PC-3 (cell line): ENCODE measurements at regions of chr19 and their contacts with region 1.

Region 1: DNA sequence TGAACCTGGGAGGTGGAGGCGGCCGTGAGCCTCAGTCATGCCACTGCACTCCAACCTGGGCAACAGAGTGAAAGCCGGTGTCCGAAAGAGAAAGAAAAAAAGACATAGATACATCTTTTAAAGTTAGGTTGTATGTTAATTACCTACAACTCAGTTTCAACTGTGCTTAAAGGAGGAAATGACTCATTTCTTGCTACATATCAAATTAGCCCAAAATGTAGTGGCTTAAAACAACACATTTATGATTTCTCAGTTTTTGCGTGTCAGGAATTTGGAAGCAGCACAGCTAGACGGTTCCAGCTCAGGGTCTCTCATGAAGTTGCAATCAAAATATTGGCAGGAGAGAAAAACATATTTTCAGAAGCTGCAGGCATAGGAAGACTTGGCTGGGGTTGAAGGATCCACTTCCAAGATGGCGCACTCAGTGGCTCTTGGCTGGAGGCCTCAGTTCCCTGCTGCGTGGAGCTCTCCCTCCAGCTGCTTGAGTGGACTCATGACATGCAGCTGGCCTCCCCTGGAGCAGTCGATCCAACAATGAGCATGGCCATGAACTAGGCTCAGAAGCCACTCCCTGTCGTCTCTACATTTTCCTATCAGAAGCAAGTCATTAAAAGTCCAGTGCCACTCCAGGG is 7.1 kb downstream of the LDLR start:
- DNase-seq: peak; percentile 35
- ATAC-seq: no peak
- H3K4me3 ChIP-seq: peak overlapping the region; percentile 24
- H3K27ac ChIP-seq: peak overlapping the region; percentile 93
- H3K4me1 ChIP-seq: peaks cover 41% of the 10 kb centered on the region
- H3K27me3 ChIP-seq: no peaks in the 10 kb centered on the region
- CTCF ChIP-seq: no peak

Region 2: GRCh38 chr19:11125994-11126685 is 29.8 kb after region 1 on chr19:
- CTCF ChIA-PET with region 1: no interaction called
- POLR2A ChIA-PET with region 1: interaction called, 10 read pairs
- intact Hi-C with region 1: no loop called
- DNase-seq: peak; percentile 87
- ATAC-seq: peak; percentile 74
- H3K4me3 ChIP-seq: no peak overlapping the region
- H3K27ac ChIP-seq: no peak overlapping the region
- H3K4me1 ChIP-seq: no peaks in the 10 kb centered on the region
- H3K27me3 ChIP-seq: no peaks in the 10 kb centered on the region
- CTCF ChIP-seq: peak; percentile 90

Region 3: DNA sequence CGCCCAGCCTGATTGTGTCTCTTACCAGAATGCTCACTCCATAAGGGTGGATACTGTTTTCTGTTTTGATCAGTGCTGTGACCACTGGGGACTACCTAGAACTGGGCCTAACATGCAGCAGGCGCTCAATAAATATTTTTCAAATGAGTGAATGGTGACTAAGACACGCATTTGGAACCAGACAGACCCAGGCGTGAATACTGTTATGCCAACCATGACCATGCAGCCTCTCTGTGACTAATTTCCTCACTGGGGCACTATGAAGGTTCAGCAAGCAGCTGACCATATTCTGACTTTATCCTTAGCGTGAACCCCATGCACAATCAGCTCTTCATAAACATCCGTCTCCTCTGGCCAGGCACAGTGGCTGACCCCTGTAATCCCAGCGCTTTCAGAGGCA is 72.2 kb after region 1 on chr19:
- CTCF ChIA-PET with region 1: interaction called, 10 read pairs
- POLR2A ChIA-PET with region 1: no interaction called
- intact Hi-C with region 1: no loop called
- DNase-seq: peak; percentile 99
- ATAC-seq: peak; percentile 97
- H3K4me3 ChIP-seq: no peak overlapping the region
- H3K27ac ChIP-seq: peak overlapping the region; percentile 76
- H3K4me1 ChIP-seq: peaks cover 18% of the 10 kb centered on the region
- H3K27me3 ChIP-seq: no peaks in the 10 kb centered on the region
- CTCF ChIP-seq: no peak